Right ventricle myocardium superior (tissue), 1 donor: ENCODE measurements at regions of chr6 and their contacts with region 1.

Region 1: DNA sequence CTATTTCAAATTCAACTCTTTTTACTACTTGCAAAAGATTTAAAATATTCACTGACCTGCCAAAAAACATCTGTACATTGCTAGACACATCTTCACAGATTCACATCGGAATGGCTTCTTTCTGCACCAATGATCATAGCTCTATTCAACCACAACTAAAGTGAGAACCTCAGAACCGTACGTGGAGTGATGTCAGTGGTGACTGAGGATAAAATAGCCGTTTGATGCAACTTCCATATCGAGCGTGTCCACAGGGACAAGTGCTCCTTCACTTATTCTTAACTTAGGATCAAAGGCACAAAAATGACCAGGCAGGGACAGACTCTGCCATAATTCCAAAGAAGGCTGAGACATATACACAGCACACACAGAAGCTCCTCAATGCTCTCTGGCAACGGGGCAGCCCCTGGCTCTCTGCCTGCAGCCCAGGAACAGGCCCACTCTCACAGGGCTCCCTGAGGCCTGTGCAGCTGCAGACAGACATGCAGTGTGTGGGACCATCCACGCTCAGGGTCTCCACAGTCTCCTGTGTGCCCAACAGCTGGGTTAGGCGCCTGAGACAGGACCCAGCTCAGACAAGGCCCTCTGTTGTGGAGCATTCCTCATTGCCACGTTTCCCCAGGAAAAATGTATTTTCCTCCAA is 22.8 kb downstream of the FYN start:
- DNase-seq: peak; percentile 70
- ATAC-seq: peak; percentile 45

Region 2: DNA sequence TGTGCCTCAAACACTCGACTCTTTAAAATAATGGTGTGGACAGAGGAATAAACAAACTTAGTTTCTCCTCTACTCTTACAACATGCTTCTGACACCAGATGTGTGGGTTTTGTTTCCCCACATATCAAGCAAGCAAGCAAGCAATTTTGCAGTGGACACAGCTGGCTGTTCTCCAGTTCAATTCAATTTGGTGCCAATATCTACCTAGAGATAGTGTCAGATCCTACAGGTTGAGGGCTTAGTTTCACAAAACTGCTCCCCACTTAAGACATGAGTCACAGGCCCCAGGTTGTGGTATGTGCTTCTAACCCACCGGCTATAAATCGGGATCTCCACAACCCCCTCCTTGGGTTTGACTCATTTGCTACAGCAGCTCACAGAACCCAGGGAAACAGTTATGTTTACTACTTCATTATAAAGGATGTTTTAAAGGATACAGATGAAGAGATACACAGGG is 113.3 kb before region 1 on chr6:
- intact Hi-C with region 1: loop called (anchors 10 kb)
- DNase-seq: no peak
- ATAC-seq: no peak